Activated CD8-positive, alpha-beta T cell treated with anti-CD3 and anti-CD28 coated beads, Interleukin-2, amount 10 ng/mL, durations not matched to agents 7 days and 5 days (primary cell): ENCODE measurements at regions of chr16 and their contacts with region 1.

Region 1: DNA sequence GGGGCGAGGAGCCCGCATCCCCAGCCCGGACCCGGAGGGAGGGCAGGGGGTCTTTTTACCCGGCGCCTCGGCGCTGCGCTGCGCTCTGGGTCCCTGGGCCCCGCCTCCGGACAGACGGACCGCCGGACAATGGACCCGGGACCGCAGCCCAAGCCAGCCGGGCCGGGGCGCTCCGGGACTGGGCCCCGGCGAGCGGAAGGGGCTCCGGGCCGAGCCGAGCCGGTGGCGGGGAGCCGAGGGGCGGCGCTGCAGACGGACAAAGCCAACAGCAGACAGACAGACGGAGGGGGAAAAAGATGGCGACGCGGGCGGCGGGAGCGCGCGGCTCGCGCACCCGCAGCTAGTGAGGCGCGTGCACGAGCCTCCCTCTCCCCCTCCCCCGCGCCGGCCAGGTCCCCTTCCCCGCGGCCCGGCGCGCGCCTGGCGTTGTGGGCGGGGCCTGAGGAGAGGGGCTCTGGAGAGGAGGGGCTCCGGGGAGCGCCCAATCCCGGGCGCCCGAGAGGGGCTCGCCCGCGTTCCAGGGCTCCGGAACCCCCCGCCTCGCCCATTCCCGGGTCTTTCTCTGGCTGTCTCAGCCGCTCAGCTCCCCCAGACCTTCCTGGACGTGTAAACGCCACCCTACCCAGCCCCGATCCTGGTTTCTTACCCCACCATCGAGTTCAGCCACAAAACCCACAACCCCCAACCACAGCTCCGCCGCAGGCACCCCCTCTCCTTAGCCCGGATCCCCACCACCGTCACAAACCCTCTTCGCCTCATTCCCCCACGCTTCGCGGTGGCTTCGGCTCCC is at the start of gene ZNF821:
- DNase-seq: peak; percentile 73
- ATAC-seq: peak; percentile 60
- H3K4me3 Mint-ChIP-seq: peak within 1 kb of the TSS; percentile 90
- H3K27ac Mint-ChIP-seq: peak within 1 kb of the TSS; percentile 89
- H3K4me1 Mint-ChIP-seq: peaks cover 48% of the 10 kb centered on the region
- H3K27me3 Mint-ChIP-seq: peaks cover 21% of the 10 kb centered on the region
- total RNA-seq, gene ZNF821: 3.7 to 4.1 TPM

Region 2: DNA sequence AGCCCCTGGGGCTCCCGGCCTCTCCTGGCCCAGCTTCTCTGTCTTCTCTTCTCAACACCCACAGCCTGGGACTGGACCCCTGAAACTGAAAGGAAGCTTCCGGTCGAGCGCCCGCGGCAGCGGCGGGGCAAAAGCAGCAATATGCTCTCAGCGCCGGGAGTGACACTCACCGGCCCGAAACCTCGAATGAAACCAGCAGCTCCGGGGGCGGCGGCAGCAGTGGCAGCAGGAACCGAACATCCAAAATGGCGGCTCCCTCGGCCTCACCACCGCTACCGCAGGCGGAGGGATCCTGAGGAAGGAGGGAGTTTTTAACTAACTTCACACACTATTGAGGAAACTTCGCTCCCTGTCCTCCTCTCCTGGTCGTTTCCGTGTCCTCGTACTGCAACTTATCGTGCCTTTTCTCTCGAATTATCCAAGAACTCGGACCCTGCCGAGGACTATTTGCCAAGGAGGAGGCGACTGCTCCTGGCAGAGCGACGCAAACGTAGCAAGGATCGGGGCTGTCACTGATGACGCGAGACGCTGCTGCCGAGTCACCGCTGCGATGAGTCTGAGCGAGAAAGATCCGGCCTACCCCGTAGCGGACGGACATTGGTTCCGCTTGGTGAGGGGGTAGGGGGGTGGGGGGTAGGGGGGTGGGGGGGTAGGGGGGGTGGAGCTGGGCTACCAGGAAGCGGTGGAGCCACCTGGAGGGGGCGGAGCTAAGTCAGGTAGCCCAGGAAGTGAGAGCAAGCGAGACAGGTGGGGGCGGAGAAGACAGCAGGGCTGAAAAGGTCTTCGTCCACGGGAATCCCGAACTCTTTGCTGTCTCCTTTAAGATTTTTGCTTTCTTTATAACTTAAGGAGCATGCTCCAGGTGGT is 75.2 kb before region 1 on chr16 and contains the start of gene AP1G1:
- CTCF ChIA-PET with region 1: interaction called, 29 read pairs
- POLR2A ChIA-PET with region 1: interaction called, 42 read pairs
- DNase-seq: peak; percentile 96
- ATAC-seq: peak; percentile 95
- H3K4me3 Mint-ChIP-seq: peak within 1 kb of the TSS; percentile 90
- H3K27ac Mint-ChIP-seq: peak within 1 kb of the TSS; percentile 100
- H3K4me1 Mint-ChIP-seq: peaks cover 25% of the 10 kb centered on the region
- H3K27me3 Mint-ChIP-seq: no peaks in the 10 kb centered on the region
- total RNA-seq, gene AP1G1: 74.9 to 77.4 TPM

Region 3: DNA sequence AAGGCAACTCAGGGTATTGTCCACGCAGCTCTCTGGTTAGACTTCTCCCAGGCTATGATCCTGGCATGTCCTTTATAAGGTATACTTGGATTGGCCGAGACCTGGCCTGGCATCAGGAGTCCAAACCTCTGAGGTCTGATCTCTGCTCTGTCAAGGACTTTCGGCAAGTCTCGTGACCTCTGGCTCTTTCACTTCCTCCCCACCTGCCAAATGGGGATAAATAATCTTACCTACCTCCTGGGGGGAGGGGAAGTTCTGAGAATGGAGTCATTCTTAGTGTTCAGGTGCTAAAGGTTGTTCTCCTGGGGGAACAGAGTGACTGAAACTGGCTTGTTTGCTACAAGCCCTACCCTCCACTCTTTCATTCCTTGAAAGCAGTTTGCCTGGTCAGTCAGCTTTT is 30.6 kb before region 1 on chr16:
- CTCF ChIA-PET with region 1: interaction called, 43 read pairs
- POLR2A ChIA-PET with region 1: interaction called, 6 read pairs
- DNase-seq: no peak
- ATAC-seq: no peak
- H3K4me3 Mint-ChIP-seq: no peak overlapping the region
- H3K27ac Mint-ChIP-seq: no peak overlapping the region
- H3K4me1 Mint-ChIP-seq: peaks cover 26% of the 10 kb centered on the region
- H3K27me3 Mint-ChIP-seq: no peaks in the 10 kb centered on the region

Region 4: GRCh38 chr16:71869089-71869488 is 15.0 kb before region 1 on chr16:
- CTCF ChIA-PET with region 1: interaction called, 80 read pairs
- POLR2A ChIA-PET with region 1: interaction called, 5 read pairs
- DNase-seq: no peak
- ATAC-seq: no peak
- H3K4me3 Mint-ChIP-seq: no peak overlapping the region
- H3K27ac Mint-ChIP-seq: no peak overlapping the region
- H3K4me1 Mint-ChIP-seq: peaks cover 13% of the 10 kb centered on the region
- H3K27me3 Mint-ChIP-seq: no peaks in the 10 kb centered on the region

Region 5: GRCh38 chr16:71961066-71962039 is 77.3 kb after region 1 on chr16:
- CTCF ChIA-PET with region 1: interaction called, 31 read pairs
- POLR2A ChIA-PET with region 1: interaction called, 5 read pairs
- DNase-seq: peak; percentile 89
- ATAC-seq: peak; percentile 95
- H3K4me3 Mint-ChIP-seq: no peak overlapping the region
- H3K27ac Mint-ChIP-seq: no peak overlapping the region
- H3K4me1 Mint-ChIP-seq: peaks cover 13% of the 10 kb centered on the region
- H3K27me3 Mint-ChIP-seq: no peaks in the 10 kb centered on the region